Aorta (tissue), 5 donors: ENCODE measurements at regions of chr15 and their contacts with region 1.

Region 1: GRCh38 chr15:42474827-42475226 is 16.1 kb downstream of the ZNF106 start:
- DNase-seq: no peak
- ATAC-seq: no peak
- H3K4me3 ChIP-seq: no peak overlapping the region
- H3K27ac ChIP-seq: peak overlapping the region in 1 of 2 donors; percentile 43
- H3K4me1 ChIP-seq: no peaks in the 10 kb centered on the region
- H3K27me3 ChIP-seq: no peaks in the 10 kb centered on the region

Region 2: DNA sequence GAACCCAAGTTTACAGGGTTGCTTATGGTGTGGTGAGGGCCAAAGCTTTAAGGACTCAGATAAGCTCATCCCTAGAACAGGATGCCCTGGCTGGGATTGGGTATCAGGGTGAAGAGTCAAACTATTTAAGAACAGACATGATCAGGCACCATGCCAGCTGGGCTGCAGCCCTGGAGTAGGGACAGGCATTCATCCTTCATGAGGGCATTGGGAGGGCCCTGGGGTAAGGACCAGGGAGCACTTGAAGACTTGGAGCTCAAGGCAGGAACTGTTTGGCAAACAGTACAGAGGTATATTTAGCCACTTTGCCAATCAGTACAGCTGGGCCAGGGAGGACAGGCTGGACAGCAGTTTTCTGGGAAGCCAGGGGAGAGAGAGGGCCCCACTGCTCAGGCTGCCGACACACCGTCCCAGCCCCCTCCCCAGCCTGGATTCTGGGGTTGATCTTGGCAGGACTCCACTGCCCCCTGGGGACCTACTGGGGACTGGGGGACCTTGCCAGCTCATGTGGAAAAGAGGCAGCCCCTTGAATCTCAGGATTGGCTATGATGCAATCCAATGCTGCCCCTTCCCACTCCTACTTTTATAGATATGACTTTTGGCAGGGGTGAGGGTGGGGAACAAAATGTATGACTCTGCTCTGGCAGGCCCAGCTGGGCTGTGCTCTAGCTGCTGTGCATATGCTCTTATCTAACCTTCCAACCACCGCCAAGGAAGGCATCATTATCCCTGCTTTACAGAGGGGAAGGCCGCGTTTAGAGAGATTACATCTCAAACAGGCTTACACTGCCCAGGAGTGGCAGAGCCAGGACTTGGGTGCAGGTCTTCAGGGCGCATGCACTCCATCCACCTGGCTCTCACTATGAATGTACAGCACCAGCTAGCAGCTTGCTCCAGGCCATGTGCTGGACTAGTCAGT is 456.3 kb before region 1 on chr15:
- intact Hi-C with region 1: no loop called
- DNase-seq: no peak
- ATAC-seq: no peak
- H3K4me3 ChIP-seq: no peak overlapping the region
- H3K27ac ChIP-seq: no peak overlapping the region
- H3K4me1 ChIP-seq: no peaks in the 10 kb centered on the region
- H3K27me3 ChIP-seq: no peaks in the 10 kb centered on the region

Region 3: GRCh38 chr15:42273102-42273899 is 201.5 kb before region 1 on chr15 and contains the starts of genes GANC and TMEM87A:
- intact Hi-C with region 1: loop called in 1 of 2 experiments (anchors 5 kb)
- DNase-seq: peak; percentile 98 to 99
- ATAC-seq: peak; percentile 99
- H3K4me3 ChIP-seq: peak within 1 kb of the TSS; percentile 60 to 82
- H3K27ac ChIP-seq: peak within 1 kb of the TSS; percentile 60 to 79
- H3K4me1 ChIP-seq: no peaks in the 10 kb centered on the region
- H3K27me3 ChIP-seq: no peaks in the 10 kb centered on the region
- total RNA-seq, gene GANC: 51.6 to 61.4 TPM
- total RNA-seq, gene TMEM87A: 58.4 to 66.8 TPM

Region 4: GRCh38 chr15:42332331-42332730 is 142.5 kb before region 1 on chr15:
- intact Hi-C with region 1: loop called in 1 of 2 experiments (anchors 10 kb)
- DNase-seq: no peak
- ATAC-seq: no peak
- H3K4me3 ChIP-seq: no peak overlapping the region
- H3K27ac ChIP-seq: no peak overlapping the region
- H3K4me1 ChIP-seq: no peaks in the 10 kb centered on the region
- H3K27me3 ChIP-seq: no peaks in the 10 kb centered on the region